T-cell (primary cell): ENCODE measurements at regions of chr2 and their contacts with region 1.

Region 1: GRCh38 chr2:68196120-68196716 is 38.5 kb downstream of the PNO1 start:
- DNase-seq: peak in 25 of 35 experiments; percentile 6 to 75 (median 47)
- ATAC-seq: peak in 1 of 4 experiments; percentile 22
- H3K4me3 ChIP-seq: no peak overlapping the region
- H3K4me3 Mint-ChIP-seq: no peak overlapping the region
- H3K27ac ChIP-seq: peak overlapping the region; percentile 14
- H3K27ac Mint-ChIP-seq: peak overlapping the region in 1 of 2 donors; percentile 56
- H3K4me1 ChIP-seq: peaks cover 2 to 4% of the 10 kb centered on the region in 2 experiments
- H3K4me1 Mint-ChIP-seq: peaks cover 65 to 67% (median 66%) of the 10 kb centered on the region in 3 donors
- H3K27me3 ChIP-seq: no peaks in the 10 kb centered on the region
- H3K27me3 Mint-ChIP-seq: no peaks in the 10 kb centered on the region

Region 2: DNA sequence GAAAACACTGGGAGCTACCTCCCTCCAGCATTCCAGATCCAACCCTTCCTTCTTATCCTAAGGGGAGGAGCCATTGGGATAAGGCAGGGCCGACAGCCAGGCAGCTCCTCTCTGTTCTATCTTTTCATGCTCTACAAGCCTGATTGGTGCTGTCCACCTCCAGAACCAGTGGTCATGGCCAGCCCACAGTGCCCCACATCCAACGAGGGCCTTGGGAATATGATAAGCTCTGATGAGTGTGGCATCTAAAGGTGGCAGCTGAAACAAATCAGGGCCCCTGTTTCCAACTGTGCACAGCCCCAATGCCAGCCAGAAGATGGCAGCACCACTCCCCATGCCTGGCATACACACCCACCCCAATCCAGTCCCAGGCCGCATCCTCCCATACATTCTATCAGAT is 462.7 kb before region 1 on chr2:
- CTCF ChIA-PET with region 1: no interaction called
- POLR2A ChIA-PET with region 1: no interaction called
- DNase-seq: no peak
- ATAC-seq: no peak
- H3K4me3 ChIP-seq: no peak overlapping the region
- H3K4me3 Mint-ChIP-seq: no peak overlapping the region
- H3K27ac ChIP-seq: no peak overlapping the region
- H3K27ac Mint-ChIP-seq: no peak overlapping the region
- H3K4me1 ChIP-seq: no peaks in the 10 kb centered on the region
- H3K4me1 Mint-ChIP-seq: no peaks in the 10 kb centered on the region
- H3K27me3 ChIP-seq: no peaks in the 10 kb centered on the region
- H3K27me3 Mint-ChIP-seq: no peaks in the 10 kb centered on the region

Region 3: GRCh38 chr2:68216454-68217310 is 20.5 kb after region 1 on chr2:
- CTCF ChIA-PET with region 1: interaction called, 4 to 10 read pairs
- POLR2A ChIA-PET with region 1: interaction called in 1 of 2 experiments, 4 read pairs
- DNase-seq: no peak
- ATAC-seq: no peak
- H3K4me3 ChIP-seq: no peak overlapping the region
- H3K4me3 Mint-ChIP-seq: no peak overlapping the region
- H3K27ac ChIP-seq: no peak overlapping the region
- H3K27ac Mint-ChIP-seq: peak overlapping the region in 1 of 2 donors; percentile 40
- H3K4me1 ChIP-seq: peaks cover 5 to 7% of the 10 kb centered on the region in 2 experiments
- H3K4me1 Mint-ChIP-seq: peaks cover 79 to 89% (median 87%) of the 10 kb centered on the region in 3 donors
- H3K27me3 ChIP-seq: no peaks in the 10 kb centered on the region
- H3K27me3 Mint-ChIP-seq: no peaks in the 10 kb centered on the region

Region 4: GRCh38 chr2:68237404-68237803 is 41.2 kb after region 1 on chr2:
- CTCF ChIA-PET with region 1: interaction called in 1 of 2 experiments, 14 read pairs
- POLR2A ChIA-PET with region 1: no interaction called
- DNase-seq: no peak
- ATAC-seq: no peak
- H3K4me3 ChIP-seq: no peak overlapping the region
- H3K4me3 Mint-ChIP-seq: peak overlapping the region in 1 of 3 donors; percentile 62
- H3K27ac ChIP-seq: no peak overlapping the region
- H3K27ac Mint-ChIP-seq: no peak overlapping the region
- H3K4me1 ChIP-seq: peaks cover 21 to 35% of the 10 kb centered on the region in 2 experiments
- H3K4me1 Mint-ChIP-seq: peaks cover 89 to 92% (median 90%) of the 10 kb centered on the region in 3 donors
- H3K27me3 ChIP-seq: no peaks in the 10 kb centered on the region
- H3K27me3 Mint-ChIP-seq: no peaks in the 10 kb centered on the region

Region 5: GRCh38 chr2:68282811-68283418 is 86.7 kb after region 1 on chr2:
- CTCF ChIA-PET with region 1: interaction called, 4 to 48 read pairs
- POLR2A ChIA-PET with region 1: no interaction called
- DNase-seq: peak in 14 of 35 experiments; percentile 2 to 67 (median 13)
- ATAC-seq: peak in 3 of 4 experiments; percentile 32 to 69 (median 54)
- H3K4me3 ChIP-seq: no peak overlapping the region
- H3K4me3 Mint-ChIP-seq: no peak overlapping the region
- H3K27ac ChIP-seq: no peak overlapping the region
- H3K27ac Mint-ChIP-seq: no peak overlapping the region
- H3K4me1 ChIP-seq: no peaks in the 10 kb centered on the region
- H3K4me1 Mint-ChIP-seq: peaks cover 0 to 5% (median 5%) of the 10 kb centered on the region in 3 donors
- H3K27me3 ChIP-seq: peaks cover 0 to 7% of the 10 kb centered on the region in 2 experiments
- H3K27me3 Mint-ChIP-seq: peaks cover 24% of the 10 kb centered on the region in 2 donors

Region 6: DNA sequence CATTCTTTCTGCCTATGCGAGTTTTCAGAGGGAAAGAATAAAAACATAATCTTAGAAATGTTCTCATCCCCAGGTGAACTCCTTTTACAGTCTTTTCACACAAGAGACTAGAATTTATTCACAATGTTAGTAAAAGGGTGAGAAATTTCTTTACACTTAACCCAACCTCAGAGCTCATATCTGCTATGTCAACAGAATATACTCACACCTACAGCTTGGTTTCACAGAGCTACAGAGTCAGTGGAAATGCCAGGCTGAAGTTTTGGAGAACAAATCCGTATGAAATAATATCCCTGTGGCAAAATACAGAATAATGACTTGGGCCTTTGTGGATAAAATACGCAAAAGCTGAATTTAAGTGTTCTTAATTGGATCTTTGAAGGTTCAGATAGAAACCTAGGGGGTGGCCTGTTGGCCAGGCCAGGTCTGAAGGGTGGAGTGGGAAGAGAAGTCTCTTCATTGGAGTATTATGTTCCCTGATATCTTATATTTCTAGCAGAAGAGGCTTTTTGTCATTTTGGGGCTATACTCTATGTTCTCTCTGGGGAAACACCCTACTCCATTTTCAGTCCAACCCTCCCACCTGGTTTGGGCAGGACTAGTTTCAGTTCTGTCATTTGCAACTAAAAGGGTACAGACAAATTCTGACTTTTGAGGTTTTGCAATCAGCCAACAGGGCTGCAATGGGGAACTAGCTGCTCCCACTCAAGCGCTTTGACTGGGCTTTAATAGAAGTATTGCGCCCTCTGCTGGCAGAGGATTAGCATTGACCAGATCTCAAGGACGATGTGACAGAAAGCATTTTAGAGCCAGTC is 245.2 kb after region 1 on chr2:
- CTCF ChIA-PET with region 1: interaction called, 3 to 13 read pairs
- POLR2A ChIA-PET with region 1: no interaction called
- DNase-seq: peak; percentile 47 to 95 (median 77)
- ATAC-seq: peak; percentile 92 to 97 (median 95)
- H3K4me3 ChIP-seq: no peak overlapping the region
- H3K4me3 Mint-ChIP-seq: no peak overlapping the region
- H3K27ac ChIP-seq: peak overlapping the region; percentile 67
- H3K27ac Mint-ChIP-seq: peak overlapping the region; percentile 71 to 87
- H3K4me1 ChIP-seq: peaks cover 0 to 12% of the 10 kb centered on the region in 2 experiments
- H3K4me1 Mint-ChIP-seq: peaks cover 0 to 24% (median 8%) of the 10 kb centered on the region in 3 donors
- H3K27me3 ChIP-seq: no peaks in the 10 kb centered on the region
- H3K27me3 Mint-ChIP-seq: no peaks in the 10 kb centered on the region